Activated CD8-positive, alpha-beta T cell treated with anti-CD3 and anti-CD28 coated beads for 36 hours (primary cell): ENCODE measurements at regions of chr5 and their contacts with region 1.

Region 1: DNA sequence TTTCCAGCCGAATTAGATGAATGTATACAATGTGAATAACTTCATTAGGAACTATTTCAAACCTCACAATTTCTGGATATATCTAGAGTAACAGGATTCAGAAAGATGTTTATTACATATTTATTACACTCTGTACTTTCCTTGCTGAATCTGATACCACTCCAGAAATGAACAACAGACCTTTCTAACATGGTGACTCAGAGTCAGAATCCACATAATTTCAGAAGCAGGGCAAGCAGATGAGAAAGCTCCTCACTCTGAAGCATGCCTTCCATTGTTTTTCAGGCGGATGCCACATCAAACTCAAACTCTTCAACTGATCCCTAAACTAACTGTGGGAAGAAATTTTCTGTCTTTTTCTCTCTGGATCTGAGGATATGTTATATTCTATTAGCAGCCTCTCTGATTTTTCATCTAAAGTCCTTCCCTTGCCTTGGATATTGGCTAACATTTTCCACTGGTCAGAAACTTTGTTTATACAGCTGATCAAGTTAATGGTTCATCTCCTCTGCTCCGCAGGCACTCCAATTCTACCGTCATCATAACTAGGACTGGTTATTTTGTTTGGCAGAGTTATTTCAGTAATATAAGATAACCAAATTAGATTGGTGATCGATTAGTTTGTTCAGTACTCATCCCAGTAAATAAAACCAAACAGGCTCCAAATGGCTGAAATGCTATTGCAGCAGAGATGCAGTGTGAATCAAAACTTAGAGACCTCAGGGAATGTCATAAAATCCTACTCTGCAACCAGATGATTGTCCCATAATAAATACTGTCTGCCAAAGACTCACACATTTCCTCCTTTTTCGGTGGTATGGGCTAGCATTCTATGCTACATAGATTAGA is 556.0 kb downstream of the EBF1 start:
- DNase-seq: no peak
- ATAC-seq: peak; percentile 64
- H3K4me3 Mint-ChIP-seq: no peak overlapping the region
- H3K27ac Mint-ChIP-seq: peak overlapping the region; percentile 16
- H3K4me1 Mint-ChIP-seq: peaks cover 33% of the 10 kb centered on the region
- H3K27me3 Mint-ChIP-seq: no peaks in the 10 kb centered on the region
- CTCF ChIP-seq: no peak

Region 2: DNA sequence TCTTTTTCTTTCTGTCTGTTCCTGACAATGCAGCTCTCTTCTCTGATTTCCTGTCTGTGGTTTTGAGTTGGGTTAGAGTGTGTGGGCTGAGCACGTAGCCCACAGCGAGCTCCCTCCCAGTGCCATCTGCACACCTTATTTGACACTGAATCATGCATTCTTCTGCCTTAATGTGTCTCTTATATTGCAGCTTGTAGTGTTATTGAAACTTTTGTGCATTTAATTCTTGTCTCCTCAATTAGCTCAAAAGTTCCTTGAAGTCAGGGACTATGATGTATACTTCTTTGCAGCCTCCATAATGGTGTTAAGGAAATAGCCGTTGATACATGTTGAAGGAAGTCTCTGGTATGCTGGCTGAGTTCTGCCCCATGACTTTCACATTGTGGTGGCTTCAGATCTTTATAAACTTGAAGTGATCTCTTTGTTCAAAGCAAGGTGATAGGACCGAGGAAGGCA is 108.6 kb before region 1 on chr5:
- CTCF ChIA-PET with region 1: no interaction called
- POLR2A ChIA-PET with region 1: no interaction called
- intact Hi-C with region 1: loop called (anchors 10 kb)
- DNase-seq: peak; percentile 73
- ATAC-seq: peak; percentile 74
- H3K4me3 Mint-ChIP-seq: peak overlapping the region; percentile 51
- H3K27ac Mint-ChIP-seq: peak overlapping the region; percentile 92
- H3K4me1 Mint-ChIP-seq: peaks cover 58% of the 10 kb centered on the region
- H3K27me3 Mint-ChIP-seq: no peaks in the 10 kb centered on the region
- CTCF ChIP-seq: no peak

Region 3: DNA sequence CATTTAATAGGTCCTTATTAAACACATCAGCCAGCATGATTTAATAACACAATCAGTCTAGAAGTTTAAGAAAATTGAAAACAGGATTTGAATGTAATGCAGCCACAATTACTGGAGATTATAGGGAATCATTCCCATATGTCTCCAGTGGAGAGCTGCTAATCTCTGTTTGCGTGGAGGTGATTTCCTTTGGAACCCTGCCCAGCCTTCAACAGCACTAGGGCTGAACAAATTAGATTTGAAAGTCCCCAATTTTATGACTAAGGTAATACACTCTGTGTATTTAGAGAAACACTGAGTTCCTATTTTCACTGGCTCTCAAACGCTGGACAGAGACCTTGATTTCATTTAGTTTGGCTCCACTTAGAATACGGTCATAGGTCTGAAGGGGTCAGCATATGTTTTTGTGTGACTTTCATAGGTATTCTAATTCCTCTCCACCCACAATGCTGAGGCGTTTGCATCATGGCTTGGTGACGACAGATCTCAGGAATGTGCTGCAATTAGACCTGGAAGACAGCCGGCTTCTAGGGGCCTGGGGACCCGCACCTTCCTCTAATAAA is 47.6 kb after region 1 on chr5:
- CTCF ChIA-PET with region 1: no interaction called
- POLR2A ChIA-PET with region 1: no interaction called
- intact Hi-C with region 1: no loop called
- DNase-seq: no peak
- ATAC-seq: no peak
- H3K4me3 Mint-ChIP-seq: no peak overlapping the region
- H3K27ac Mint-ChIP-seq: no peak overlapping the region
- H3K4me1 Mint-ChIP-seq: no peaks in the 10 kb centered on the region
- H3K27me3 Mint-ChIP-seq: no peaks in the 10 kb centered on the region
- CTCF ChIP-seq: no peak